ENCODE measurements at regions of chr1 and their contacts with region 1.

Region 1: GRCh38 chr1:67760030-67760821 is 73.0 kb downstream of the GNG12 start:
- DNase-seq: peak; percentile 78
- H3K4me3 ChIP-seq: no peak overlapping the region
- H3K27ac ChIP-seq: peak overlapping the region; percentile 24
- H3K4me1 ChIP-seq: peaks cover 7% of the 10 kb centered on the region
- H3K27me3 ChIP-seq: no peaks in the 10 kb centered on the region
- CTCF ChIP-seq: peak; percentile 67 to 85
- POLR2A ChIP-seq: no peak

Region 2: GRCh38 chr1:67524143-67525052 is 235.8 kb before region 1 on chr1:
- CTCF ChIA-PET with region 1: interaction called, 14 read pairs
- POLR2A ChIA-PET with region 1: no interaction called
- dilution Hi-C with region 1: loop called (anchors 25 kb)
- intact Hi-C with region 1: no loop called
- DNase-seq: no peak
- H3K4me3 ChIP-seq: no peak overlapping the region
- H3K27ac ChIP-seq: no peak overlapping the region
- H3K4me1 ChIP-seq: peaks cover 11% of the 10 kb centered on the region
- H3K27me3 ChIP-seq: no peaks in the 10 kb centered on the region
- CTCF ChIP-seq: peak in 1 of 2 donors; percentile 22
- POLR2A ChIP-seq: no peak

Region 3: DNA sequence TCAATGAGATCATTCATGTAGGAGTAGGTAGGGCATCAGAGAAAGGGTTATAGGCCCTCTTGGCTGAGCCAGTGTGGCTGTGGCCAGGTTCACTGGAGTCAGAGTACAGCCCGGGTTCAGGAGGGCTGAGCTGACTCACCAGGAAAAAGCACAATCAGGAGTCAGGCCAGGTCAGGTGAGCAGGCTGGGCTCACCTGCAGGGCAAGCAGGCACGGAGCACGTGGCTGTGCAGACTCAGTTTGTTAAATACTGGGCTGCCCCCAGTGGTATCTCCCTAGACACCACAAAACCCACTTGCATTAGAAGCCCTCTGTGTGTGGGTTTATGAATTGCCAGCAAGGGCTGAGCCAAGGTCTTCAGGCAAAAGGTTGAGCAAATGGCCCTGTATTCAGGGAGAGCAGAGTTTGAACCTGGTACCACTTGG is 207.9 kb before region 1 on chr1:
- CTCF ChIA-PET with region 1: interaction called, 131 read pairs
- POLR2A ChIA-PET with region 1: no interaction called
- dilution Hi-C with region 1: loop called (anchors 25 kb)
- intact Hi-C with region 1: no loop called
- DNase-seq: no peak
- H3K4me3 ChIP-seq: no peak overlapping the region
- H3K27ac ChIP-seq: no peak overlapping the region
- H3K4me1 ChIP-seq: peaks cover 3% of the 10 kb centered on the region
- H3K27me3 ChIP-seq: peaks cover 0 to 3% of the 10 kb centered on the region in 2 experiments
- CTCF ChIP-seq: no peak
- POLR2A ChIP-seq: no peak

Region 4: DNA sequence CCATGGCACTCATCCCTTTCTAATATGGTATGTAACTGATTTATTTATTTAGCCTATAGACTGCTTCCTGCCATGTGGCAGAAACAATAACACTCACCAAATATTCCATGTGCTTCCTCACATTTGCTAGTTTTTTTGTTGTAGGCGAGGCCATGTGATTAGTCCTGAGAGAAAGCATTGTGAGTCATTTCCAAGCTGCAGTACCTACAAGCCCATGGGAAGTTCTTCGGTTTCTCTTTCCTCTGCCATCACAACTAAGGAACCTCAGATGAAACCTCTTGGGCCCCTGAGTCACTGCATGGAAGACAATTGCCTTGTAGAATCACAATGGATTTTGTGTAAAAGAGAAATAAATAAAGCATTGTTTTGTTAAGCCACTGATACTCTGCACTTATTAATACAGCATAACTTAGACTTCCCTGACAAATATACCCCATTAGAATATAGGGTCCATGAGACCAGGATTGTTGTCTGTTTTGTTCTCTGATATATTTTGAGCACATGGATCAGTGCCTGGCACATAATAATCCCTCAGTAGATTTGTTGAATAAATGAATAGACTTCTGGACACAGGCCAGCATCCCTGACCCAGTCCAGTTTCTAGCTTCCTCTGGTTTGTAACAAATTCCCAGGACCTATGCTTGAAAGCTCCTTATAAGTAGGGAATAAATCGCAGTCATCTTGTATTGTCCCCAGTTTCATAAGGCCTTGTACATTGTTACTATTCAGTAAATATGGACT is 133.6 kb before region 1 on chr1:
- CTCF ChIA-PET with region 1: interaction called, 11 read pairs
- POLR2A ChIA-PET with region 1: no interaction called
- dilution Hi-C with region 1: no loop called
- intact Hi-C with region 1: loop called (anchors 1 kb)
- DNase-seq: peak; percentile 99
- H3K4me3 ChIP-seq: no peak overlapping the region
- H3K27ac ChIP-seq: peak overlapping the region; percentile 98
- H3K4me1 ChIP-seq: peaks cover 56% of the 10 kb centered on the region
- H3K27me3 ChIP-seq: no peaks in the 10 kb centered on the region
- CTCF ChIP-seq: no peak
- POLR2A ChIP-seq: peak; percentile 14

Region 5: GRCh38 chr1:67705735-67706453 is 54.3 kb before region 1 on chr1:
- CTCF ChIA-PET with region 1: interaction called, 23 read pairs
- POLR2A ChIA-PET with region 1: no interaction called
- dilution Hi-C with region 1: no loop called
- intact Hi-C with region 1: loop called (anchors 1 kb)
- DNase-seq: no peak
- H3K4me3 ChIP-seq: no peak overlapping the region
- H3K27ac ChIP-seq: no peak overlapping the region
- H3K4me1 ChIP-seq: peaks cover 19% of the 10 kb centered on the region
- H3K27me3 ChIP-seq: no peaks in the 10 kb centered on the region
- CTCF ChIP-seq: no peak
- POLR2A ChIP-seq: no peak

Region 6: GRCh38 chr1:67735806-67736627 is 24.2 kb before region 1 on chr1:
- CTCF ChIA-PET with region 1: interaction called, 18 read pairs
- POLR2A ChIA-PET with region 1: no interaction called
- dilution Hi-C with region 1: no loop called
- intact Hi-C with region 1: no loop called
- DNase-seq: peak; percentile 98
- H3K4me3 ChIP-seq: peak overlapping the region in 1 of 3 experiments; percentile 25
- H3K27ac ChIP-seq: peak overlapping the region; percentile 89
- H3K4me1 ChIP-seq: peaks cover 38% of the 10 kb centered on the region
- H3K27me3 ChIP-seq: no peaks in the 10 kb centered on the region
- CTCF ChIP-seq: no peak
- POLR2A ChIP-seq: no peak

Measured in endothelial cell of umbilical vein (primary cell).